Pancreas (tissue), 10 donors: ENCODE measurements at regions of chr1 and their contacts with region 1.

Region 1: DNA sequence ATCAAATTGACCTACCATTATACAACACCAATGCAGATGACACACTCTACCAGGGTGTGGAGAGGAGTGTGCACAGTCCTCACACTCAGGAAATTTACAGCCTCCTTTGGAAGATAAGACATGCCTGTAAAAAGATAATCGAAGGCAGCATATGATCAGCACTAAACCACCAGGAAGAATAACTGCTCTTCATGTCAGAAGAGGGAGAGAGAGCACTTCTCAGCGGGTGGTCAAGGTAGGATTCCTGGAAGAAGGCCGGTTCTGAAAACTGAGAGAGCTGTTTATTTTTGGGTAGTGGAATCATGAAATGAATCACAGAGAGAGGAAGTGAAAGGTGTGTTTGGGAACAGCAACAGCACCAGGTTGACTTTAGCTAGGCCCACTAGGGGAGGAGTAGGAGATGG is 14.0 kb upstream of the ZNF697 start:
- DNase-seq: no peak
- ATAC-seq: no peak
- H3K4me3 ChIP-seq: no peak overlapping the region
- H3K27ac ChIP-seq: no peak overlapping the region
- H3K4me1 ChIP-seq: peaks cover 18 to 23% (median 20%) of the 10 kb centered on the region in 3 donors
- H3K27me3 ChIP-seq: no peaks in the 10 kb centered on the region
- CTCF ChIP-seq: no peak

Region 2: DNA sequence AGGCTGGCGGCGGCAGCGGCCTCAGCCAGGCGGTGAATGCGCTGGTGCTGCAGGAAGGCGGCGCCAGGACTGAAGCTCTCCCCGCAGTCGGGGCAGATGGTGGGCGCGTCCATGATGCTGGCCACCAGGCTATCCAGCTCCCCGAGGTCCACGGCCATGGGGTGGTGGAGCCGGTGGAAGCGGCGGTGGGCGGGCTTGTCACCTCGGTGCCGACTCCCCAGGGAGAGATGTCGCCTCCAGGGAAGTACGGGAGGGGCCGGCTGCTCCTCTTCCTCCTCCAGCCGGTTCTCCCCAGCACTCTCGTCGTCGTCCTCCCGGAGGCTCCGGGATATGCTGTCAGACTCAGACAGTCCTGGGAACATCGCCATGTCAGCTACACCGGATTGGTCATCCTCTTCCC is 38.4 kb before region 1 on chr1:
- intact Hi-C with region 1: loop called in 2 of 3 experiments (anchors 5 kb)
- DNase-seq: peak in 1 of 6 donors; percentile 67
- ATAC-seq: no peak
- H3K4me3 ChIP-seq: no peak overlapping the region
- H3K27ac ChIP-seq: no peak overlapping the region
- H3K4me1 ChIP-seq: peaks cover 0 to 5% (median 2%) of the 10 kb centered on the region in 3 donors
- H3K27me3 ChIP-seq: no peaks in the 10 kb centered on the region
- CTCF ChIP-seq: no peak

Region 3: DNA sequence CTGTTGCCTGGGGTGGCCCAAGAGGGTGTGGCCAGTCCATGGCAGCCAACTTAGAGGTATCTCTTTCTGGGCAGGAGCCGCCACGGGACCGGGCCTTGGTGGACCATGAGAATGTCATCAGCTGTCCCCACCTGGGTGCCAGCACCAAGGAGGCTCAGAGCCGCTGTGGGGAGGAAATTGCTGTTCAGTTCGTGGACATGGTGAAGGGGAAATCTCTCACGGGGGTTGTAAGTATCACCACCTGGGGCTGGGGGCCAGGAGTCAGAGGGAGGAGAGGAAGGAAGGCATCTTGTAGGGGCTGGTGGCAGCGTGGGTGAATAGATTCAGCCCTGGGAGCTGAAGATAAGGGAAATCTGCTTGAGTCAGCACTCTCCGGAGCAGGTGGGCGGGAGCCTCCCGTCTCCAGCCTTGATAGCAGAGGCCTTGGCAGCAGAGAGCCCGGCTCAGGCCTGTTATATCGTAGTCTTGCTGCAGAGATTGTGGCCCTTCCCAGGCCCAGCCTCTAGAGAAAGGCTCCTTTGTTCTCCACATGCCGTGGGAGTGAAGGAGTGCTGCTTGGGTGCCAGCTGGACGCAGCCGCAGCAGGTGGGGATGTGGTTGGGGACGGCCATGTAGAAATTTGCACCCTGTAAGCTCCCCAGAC is 75.1 kb after region 1 on chr1:
- intact Hi-C with region 1: no loop called
- DNase-seq: peak; percentile 70 to 90 (median 79)
- ATAC-seq: peak; percentile 89 to 95 (median 92)
- H3K4me3 ChIP-seq: no peak overlapping the region
- H3K27ac ChIP-seq: peak overlapping the region; percentile 0 to 73 (median 64)
- H3K4me1 ChIP-seq: peaks cover 7 to 13% (median 12%) of the 10 kb centered on the region in 3 donors
- H3K27me3 ChIP-seq: no peaks in the 10 kb centered on the region
- CTCF ChIP-seq: no peak

Region 4: DNA sequence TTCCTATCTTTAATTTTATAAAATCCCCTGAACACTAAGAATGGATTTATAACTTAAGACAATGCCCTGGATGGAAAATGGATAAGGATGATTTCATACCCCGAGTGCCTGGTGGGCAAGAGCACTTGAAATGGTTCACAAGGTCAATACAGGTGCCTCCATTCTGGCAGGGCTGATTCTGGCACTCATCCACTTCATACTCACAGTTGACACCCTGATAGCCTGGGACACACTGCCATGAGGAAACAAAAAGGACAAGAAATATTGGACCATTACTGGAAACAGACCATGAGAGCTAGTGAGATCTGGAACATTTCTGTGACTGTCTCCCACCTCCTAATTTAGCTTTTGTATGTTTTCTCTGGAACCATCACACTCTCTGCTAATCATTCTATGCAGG is 273.3 kb after region 1 on chr1:
- intact Hi-C with region 1: no loop called
- DNase-seq: peak in 3 of 6 donors; percentile 31 to 39 (median 35)
- ATAC-seq: peak; percentile 55 to 91 (median 75)
- H3K4me3 ChIP-seq: no peak overlapping the region
- H3K27ac ChIP-seq: peak overlapping the region in 1 of 4 donors; percentile 34
- H3K4me1 ChIP-seq: peaks cover 0 to 6% (median 0%) of the 10 kb centered on the region in 3 donors
- H3K27me3 ChIP-seq: no peaks in the 10 kb centered on the region
- CTCF ChIP-seq: no peak